ENCODE measurements at regions of chr1 and their contacts with region 1.

Region 1: DNA sequence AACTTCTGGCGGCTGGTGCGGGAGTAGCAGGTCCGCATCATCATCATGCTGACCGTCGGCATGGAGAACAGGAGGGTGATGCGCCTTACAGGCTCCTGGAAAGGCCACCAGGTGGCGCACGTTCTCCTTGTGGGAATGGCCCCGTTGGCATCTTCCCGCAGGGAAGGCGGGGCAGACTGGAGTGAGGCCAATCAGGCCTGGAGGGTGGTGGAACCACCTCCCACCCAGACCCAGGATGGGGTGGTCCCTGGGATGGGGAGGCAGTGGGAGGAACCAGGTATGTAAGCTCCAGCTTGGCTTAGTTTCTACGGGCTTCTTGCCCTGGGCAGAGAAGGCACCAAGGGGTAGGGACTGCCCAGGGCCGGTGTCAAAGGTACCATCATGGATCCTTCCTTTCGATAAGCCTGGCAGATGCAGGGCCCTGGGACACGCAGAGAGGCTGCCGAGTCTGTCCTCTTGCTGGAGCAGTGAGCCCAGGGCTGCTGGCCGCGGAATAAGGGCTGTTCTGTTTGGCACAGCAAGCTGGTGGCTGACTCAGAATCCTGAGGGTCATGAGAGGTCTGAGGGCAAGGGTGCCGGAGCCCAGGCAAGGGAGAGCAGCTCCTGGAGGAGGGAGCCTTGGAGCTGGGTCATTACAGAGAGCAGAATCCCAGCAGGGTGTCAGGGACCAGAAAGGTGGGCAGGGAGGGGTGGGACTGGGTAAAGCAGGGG is 8.7 kb upstream of the LGR6 start:
- DNase-seq: peak; percentile 82 to 94 (median 92)
- ATAC-seq: peak; percentile 59 to 73
- H3K4me3 ChIP-seq: no peak overlapping the region
- H3K27ac ChIP-seq: no peak overlapping the region
- H3K4me1 ChIP-seq: no peaks in the 10 kb centered on the region
- H3K27me3 ChIP-seq: no peaks in the 10 kb centered on the region

Region 2: DNA sequence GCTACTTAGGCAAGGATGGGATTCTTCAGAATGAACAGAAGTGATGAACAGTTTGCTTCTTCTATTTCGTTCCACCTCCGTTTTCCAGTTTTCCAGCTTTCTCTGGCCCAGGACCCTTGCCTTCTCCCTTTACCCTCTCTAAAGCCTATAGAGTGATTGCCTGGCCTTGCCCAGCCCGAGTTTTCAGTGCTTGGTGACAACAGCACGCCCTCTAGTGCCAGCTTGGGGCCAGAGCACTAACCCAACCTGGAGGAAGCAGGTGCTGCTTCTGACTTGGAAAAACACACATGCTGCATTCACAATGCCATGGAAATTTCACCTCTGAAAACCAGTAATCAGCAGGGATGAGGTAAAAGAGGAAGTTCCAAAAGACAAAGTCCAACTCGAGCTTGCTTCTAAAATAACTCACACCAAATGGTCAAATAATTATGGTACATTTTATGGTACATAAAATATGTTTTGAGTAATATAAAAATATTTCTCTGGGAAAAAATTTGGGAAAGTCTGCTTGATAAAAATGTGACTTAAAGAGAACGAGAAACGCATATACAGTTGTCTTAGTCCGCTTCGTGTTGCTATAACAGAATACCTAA is 130.8 kb after region 1 on chr1:
- intact Hi-C with region 1: loop called in 3 of 4 experiments (anchors 2 to 5 kb)
- DNase-seq: peak; percentile 68 to 86 (median 84)
- ATAC-seq: peak; percentile 65 to 78
- H3K4me3 ChIP-seq: no peak overlapping the region
- H3K27ac ChIP-seq: no peak overlapping the region
- H3K4me1 ChIP-seq: peaks cover 5% of the 10 kb centered on the region
- H3K27me3 ChIP-seq: no peaks in the 10 kb centered on the region

Region 3: GRCh38 chr1:202376247-202376646 is 191.3 kb after region 1 on chr1:
- intact Hi-C with region 1: no loop called
- DNase-seq: no peak
- ATAC-seq: no peak
- H3K4me3 ChIP-seq: no peak overlapping the region
- H3K27ac ChIP-seq: no peak overlapping the region
- H3K4me1 ChIP-seq: peaks cover under 1% of the 10 kb centered on the region
- H3K27me3 ChIP-seq: no peaks in the 10 kb centered on the region

Region 4: DNA sequence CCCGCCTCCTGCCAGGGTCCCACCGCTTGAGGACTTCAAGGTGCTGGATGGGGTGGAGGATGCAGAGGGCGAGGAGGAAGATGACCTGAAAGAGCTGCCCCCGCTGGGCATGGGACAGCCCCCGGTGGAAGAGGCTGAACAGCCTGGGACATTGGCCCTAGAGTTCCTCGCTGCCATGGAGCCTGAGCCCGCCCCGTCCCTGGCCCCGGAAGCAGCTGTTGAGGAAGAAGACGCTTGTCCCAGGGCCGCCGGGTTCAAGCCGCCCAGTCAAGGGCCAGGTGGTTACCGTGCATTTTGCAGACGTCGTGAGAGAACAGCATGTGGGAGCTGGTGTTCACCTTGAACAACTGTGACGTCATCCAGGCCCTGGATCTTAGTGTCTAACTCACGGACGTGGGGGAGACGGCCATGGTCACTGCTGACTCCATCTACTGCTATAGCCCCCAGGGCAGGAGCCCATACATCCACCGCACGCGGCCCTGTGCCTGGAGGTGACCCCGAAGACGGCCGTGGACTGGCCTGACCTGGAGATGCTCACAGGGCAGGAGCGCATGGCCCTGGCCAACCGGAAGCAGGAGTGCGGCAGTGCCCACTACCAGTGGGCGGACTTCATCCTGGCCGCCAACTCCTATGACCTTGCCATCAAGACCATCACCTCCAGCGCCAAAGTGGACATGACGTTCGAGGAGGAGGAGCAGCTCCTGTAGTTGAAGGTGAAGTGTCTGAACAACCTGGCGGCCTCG is 253.7 kb after region 1 on chr1:
- intact Hi-C with region 1: no loop called
- DNase-seq: peak in 2 of 3 donors; percentile 50 to 54
- ATAC-seq: peak; percentile 22 to 46
- H3K4me3 ChIP-seq: no peak overlapping the region
- H3K27ac ChIP-seq: no peak overlapping the region
- H3K4me1 ChIP-seq: no peaks in the 10 kb centered on the region
- H3K27me3 ChIP-seq: no peaks in the 10 kb centered on the region

Region 5: GRCh38 chr1:202716654-202717053 is 531.7 kb after region 1 on chr1:
- intact Hi-C with region 1: loop called in 3 of 4 experiments (anchors 5 to 10 kb)
- DNase-seq: no peak
- ATAC-seq: no peak
- H3K4me3 ChIP-seq: no peak overlapping the region
- H3K27ac ChIP-seq: no peak overlapping the region
- H3K4me1 ChIP-seq: no peaks in the 10 kb centered on the region
- H3K27me3 ChIP-seq: no peaks in the 10 kb centered on the region

Measured in right cardiac atrium (tissue), 5 donors.